PC-9 (cell line): ENCODE measurements at regions of chrX and their contacts with region 1.

Region 1: GRCh38 chrX:56764153-56764974 is 35.3 kb downstream of the NBDY start:
- DNase-seq: peak; percentile 48 to 78
- H3K4me3 ChIP-seq: no peak overlapping the region
- H3K27ac ChIP-seq: no peak overlapping the region
- H3K4me1 ChIP-seq: no peaks in the 10 kb centered on the region
- H3K27me3 ChIP-seq: no peaks in the 10 kb centered on the region
- CTCF ChIP-seq: peak; percentile 65

Region 2: DNA sequence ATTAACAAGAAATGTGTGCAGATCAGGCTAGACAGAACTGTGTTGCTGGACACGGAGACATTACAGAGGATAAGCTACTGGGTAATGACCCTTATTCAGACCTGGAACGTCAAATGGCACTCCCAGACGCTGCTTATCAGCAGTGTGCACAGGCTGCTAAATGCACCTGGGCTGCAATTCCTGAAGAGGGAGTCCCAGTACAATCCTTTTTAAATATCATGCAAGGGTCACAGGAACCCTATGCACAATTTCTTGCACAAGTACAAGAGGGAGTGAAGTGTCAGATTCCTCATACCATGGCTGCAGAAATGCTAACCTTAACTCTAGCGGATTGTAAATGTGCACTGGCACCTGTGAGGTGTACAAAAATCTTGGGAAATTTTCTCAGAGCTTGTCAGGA is 340.0 kb after region 1 on chrX:
- CTCF ChIA-PET with region 1: no interaction called
- POLR2A ChIA-PET with region 1: no interaction called
- intact Hi-C with region 1: loop called (anchors 10 kb)
- DNase-seq: no peak
- H3K4me3 ChIP-seq: no peak overlapping the region
- H3K27ac ChIP-seq: no peak overlapping the region
- H3K4me1 ChIP-seq: no peaks in the 10 kb centered on the region
- H3K27me3 ChIP-seq: no peaks in the 10 kb centered on the region
- CTCF ChIP-seq: no peak

Region 3: DNA sequence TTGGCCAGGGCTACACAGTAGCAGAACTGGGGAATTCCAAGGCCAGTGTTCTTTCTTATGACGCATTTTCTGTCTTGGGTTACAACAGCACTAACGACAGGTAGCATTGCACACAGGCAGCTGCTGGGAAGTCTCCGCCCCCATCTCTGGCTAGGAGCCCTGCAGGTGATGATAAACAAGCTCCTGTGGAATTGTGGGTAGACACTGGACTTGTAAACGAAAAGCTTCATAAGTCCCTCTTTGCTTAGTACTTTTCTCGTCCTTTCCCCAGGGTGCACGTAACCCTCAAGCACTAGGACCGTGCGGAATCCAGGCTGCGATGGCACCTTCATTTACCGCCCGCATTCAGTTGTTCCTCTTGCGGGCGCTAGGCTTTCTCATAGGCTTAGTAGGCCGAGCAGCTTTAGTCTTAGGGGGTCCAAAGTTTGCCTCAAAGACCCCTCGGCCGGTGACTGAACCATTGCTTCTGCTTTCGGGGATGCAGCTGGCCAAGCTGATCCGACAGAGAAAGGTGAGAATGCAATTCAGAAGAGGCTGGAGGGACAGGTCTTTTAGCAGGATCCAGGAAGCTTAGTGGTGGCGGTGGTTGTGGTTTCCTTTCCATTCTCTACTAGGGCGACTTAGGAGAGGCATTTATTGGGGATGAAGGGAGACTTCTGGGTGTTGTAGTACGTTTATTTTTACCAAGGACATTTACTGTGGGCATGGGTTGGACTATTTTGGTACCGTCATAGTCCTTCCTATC is 522.3 kb after region 1 on chrX and contains the start of gene FAAH2:
- CTCF ChIA-PET with region 1: interaction called, 3 read pairs
- POLR2A ChIA-PET with region 1: no interaction called
- intact Hi-C with region 1: loop called (anchors 10 kb)
- DNase-seq: peak; percentile 90 to 92
- H3K4me3 ChIP-seq: peak within 1 kb of the TSS; percentile 60
- H3K27ac ChIP-seq: peak within 1 kb of the TSS; percentile 59
- H3K4me1 ChIP-seq: 0 out of 2 replicates have a peak, but pooled peaks cover 13% of the 10 kb centered on the region
- H3K27me3 ChIP-seq: no peaks in the 10 kb centered on the region
- CTCF ChIP-seq: no peak; the same call in 1 of the 2 replicates
- total RNA-seq, gene FAAH2: 8.2 and 10.4 TPM in 2 replicates

Region 4: DNA sequence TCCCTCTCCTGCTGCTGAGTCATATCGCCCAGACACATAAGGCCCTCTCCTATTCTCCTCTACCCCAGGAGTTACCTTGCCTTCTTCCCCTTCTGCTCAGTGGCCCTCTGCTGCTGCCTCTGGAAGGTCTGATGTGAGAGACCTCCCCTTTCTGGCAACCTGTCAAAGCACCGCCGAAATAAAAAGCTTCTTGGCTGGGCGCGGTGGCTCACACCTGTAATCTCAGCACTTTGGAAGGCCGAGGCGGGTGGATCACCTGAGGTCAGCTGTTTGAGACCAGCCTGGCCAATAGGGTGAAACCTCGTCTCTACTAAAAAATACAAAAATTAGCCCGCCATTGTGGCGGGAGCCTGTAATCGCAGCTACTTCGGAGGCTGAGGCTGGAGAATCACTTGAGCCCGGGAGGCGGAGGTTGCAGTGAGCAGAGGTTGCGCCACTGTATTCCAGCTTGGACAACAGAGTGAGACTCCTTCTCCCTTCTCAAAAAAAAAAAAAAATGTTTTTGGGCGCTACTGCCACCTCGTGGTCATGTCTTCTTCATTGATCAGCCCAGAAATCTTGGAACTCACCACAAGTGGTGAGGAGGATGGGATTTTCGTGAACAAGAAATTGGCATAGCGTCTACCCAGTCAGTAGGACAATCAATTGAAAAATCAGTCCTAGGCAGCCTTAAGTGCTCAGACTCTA is 1154.5 kb after region 1 on chrX:
- CTCF ChIA-PET with region 1: no interaction called
- POLR2A ChIA-PET with region 1: no interaction called
- intact Hi-C with region 1: loop called (anchors 10 kb)
- DNase-seq: peak in 1 of 2 experiments; percentile 19
- H3K4me3 ChIP-seq: no peak overlapping the region
- H3K27ac ChIP-seq: no peak overlapping the region
- H3K4me1 ChIP-seq: no peaks in the 10 kb centered on the region
- H3K27me3 ChIP-seq: no peaks in the 10 kb centered on the region; the same call in 1 of the 2 replicates
- CTCF ChIP-seq: peak; percentile 67